GM10248 (cell line): ENCODE measurements at regions of chr12 and their contacts with region 1.

Region 1: GRCh38 chr12:82425241-82425640 is 66.9 kb downstream of the METTL25 start:
- DNase-seq: no peak
- CTCF ChIP-seq: no peak

Region 2: DNA sequence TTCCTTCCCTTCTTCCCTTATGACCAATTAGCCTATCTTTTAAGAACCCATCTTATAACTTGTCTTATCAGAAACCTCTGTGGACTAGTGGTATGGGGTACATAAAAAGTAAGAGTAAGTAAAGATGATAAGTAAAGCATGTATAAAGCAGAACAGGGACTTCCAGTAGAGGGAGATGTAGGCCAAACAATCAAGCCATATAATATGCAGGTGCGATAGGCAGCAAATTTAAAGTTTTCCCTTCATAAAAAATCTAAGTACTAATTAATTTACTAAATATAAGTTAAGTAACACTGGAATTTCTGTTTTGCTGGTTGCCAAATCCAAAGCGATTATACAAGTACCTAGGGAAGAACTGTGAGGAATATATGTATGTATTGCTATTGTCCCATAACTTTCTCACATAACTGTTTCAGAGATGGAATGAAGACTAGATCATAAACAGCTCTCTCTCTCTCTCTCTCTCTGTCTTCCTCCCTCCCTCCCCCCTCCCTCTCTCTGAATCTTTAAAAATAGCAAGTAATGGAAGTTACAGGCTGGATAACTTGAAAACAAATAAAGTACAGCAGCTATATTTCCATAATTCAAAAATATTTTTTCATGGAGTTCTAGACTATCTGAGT is 41.2 kb before region 1 on chr12:
- CTCF ChIA-PET with region 1: interaction called, 4 read pairs
- POLR2A ChIA-PET with region 1: interaction called, 10 read pairs
- DNase-seq: no peak
- CTCF ChIP-seq: peak; percentile 54

Region 3: GRCh38 chr12:82438356-82438755 is 13.1 kb after region 1 on chr12:
- CTCF ChIA-PET with region 1: interaction called, 12 read pairs
- POLR2A ChIA-PET with region 1: no interaction called
- DNase-seq: no peak
- CTCF ChIP-seq: no peak

Region 4: GRCh38 chr12:82619644-82620043 is 194.4 kb after region 1 on chr12:
- CTCF ChIA-PET with region 1: no interaction called
- POLR2A ChIA-PET with region 1: no interaction called
- DNase-seq: no peak
- CTCF ChIP-seq: no peak